ENCODE measurements at regions of chrX and their contacts with region 1.

Region 1: DNA sequence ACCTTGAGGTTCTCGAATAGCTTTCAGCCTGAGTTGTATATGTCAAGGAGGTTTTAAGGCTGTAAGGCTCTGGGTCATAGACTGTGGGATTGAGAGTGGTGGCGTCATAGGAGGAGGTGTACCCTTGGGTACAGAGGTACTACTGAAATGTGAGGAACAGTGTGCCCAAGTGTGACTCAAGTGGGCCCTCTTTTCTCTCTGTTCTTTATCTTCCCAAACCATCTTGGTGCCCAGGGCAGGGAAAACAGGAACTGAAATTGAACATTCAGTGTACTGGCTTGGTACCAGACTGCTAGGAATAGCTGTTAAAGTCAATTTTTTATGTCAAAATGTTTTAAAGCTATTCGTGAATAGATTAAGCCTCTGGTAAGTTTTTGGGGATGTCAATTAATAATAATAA is 136.2 kb upstream of the RPS6KA3 start:
- DNase-seq: no peak
- ATAC-seq: no peak
- H3K4me3 Mint-ChIP-seq: no peak overlapping the region
- H3K27ac Mint-ChIP-seq: no peak overlapping the region
- H3K4me1 Mint-ChIP-seq: peaks cover 16% of the 10 kb centered on the region
- H3K27me3 Mint-ChIP-seq: no peaks in the 10 kb centered on the region

Region 2: GRCh38 chrX:20320461-20321159 is 82.3 kb before region 1 on chrX:
- CTCF ChIA-PET with region 1: no interaction called
- POLR2A ChIA-PET with region 1: no interaction called
- intact Hi-C with region 1: loop called in 1 of 2 experiments (anchors 2 kb)
- DNase-seq: peak; percentile 30
- ATAC-seq: peak; percentile 66
- H3K4me3 Mint-ChIP-seq: peak overlapping the region; percentile 40
- H3K27ac Mint-ChIP-seq: peak overlapping the region; percentile 48
- H3K4me1 Mint-ChIP-seq: peaks cover 23% of the 10 kb centered on the region
- H3K27me3 Mint-ChIP-seq: no peaks in the 10 kb centered on the region

Region 3: DNA sequence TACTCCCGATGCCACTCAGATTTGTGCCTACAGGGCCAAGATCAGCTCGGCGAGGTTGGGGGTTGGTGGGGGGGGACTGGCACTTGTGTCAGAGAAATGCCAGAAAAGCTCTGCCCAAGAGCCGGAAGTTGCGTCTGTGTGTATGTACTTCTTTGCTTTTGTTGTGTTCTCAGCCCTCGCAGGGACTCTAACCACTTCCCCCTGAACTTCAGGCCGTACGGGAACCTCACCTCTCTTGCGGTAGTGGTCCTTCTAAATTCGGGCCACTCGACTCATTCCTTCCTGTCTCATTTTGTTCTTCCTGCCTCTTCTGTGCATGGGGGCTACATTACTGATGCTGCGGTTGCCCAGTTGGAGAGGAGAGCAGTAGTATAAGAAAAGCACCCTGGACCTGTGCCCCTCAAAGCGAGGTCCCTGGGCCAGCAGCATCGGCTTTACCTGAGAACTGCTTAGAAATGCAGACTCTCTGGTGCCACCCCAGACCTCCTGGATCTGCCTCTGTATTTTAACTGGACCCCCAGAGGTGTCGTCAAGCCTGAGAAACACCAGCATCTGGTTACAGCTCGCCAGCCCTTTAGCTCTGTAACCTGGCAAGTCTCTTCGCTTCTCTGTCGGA is 10.0 kb after region 1 on chrX:
- CTCF ChIA-PET with region 1: interaction called, 12 read pairs
- POLR2A ChIA-PET with region 1: no interaction called
- intact Hi-C with region 1: no loop called
- DNase-seq: peak; percentile 56
- ATAC-seq: peak; percentile 75
- H3K4me3 Mint-ChIP-seq: peak overlapping the region; percentile 29
- H3K27ac Mint-ChIP-seq: peak overlapping the region; percentile 80
- H3K4me1 Mint-ChIP-seq: peaks cover 32% of the 10 kb centered on the region
- H3K27me3 Mint-ChIP-seq: no peaks in the 10 kb centered on the region

Measured in activated CD4-positive, alpha-beta T cell treated with anti-CD3 and anti-CD28 coated beads for 36 hours (primary cell).